CD8-positive, alpha-beta T cell (primary cell): ENCODE measurements at regions of chr3 and their contacts with region 1.

Region 1: GRCh38 chr3:161305095-161305991 is 66.0 kb downstream of the SPTSSB start:
- DNase-seq: peak in 3 of 9 experiments; percentile 18 to 52 (median 38)
- ATAC-seq: no peak
- H3K4me3 ChIP-seq: no peak overlapping the region
- H3K4me3 Mint-ChIP-seq: no peak overlapping the region
- H3K27ac ChIP-seq: no peak overlapping the region
- H3K27ac Mint-ChIP-seq: no peak overlapping the region
- H3K4me1 ChIP-seq: peaks cover 11% of the 10 kb centered on the region
- H3K4me1 Mint-ChIP-seq: peaks cover 29% of the 10 kb centered on the region
- H3K27me3 ChIP-seq: no peaks in the 10 kb centered on the region
- H3K27me3 Mint-ChIP-seq: peaks cover 3% of the 10 kb centered on the region
- CTCF ChIP-seq: peak; percentile 79

Region 2: DNA sequence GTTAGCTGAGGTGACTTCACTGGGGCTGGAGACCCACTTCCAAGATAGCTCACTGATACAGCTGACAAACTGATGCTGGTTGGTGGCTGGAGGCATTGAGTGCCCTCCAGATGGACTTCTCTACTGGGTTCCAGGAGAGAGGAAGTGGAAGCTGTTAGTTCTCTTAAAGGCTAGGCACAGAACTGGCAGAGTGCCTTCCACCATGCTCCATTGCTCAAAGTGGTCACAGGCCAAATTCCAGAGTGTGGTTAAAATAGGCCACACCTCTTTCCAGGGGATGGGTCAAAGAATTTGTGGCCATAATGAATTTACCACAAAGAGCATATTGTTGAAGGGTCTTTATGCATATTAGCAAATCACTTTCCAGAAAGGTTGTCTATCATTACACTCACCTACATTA is 10.0 kb before region 1 on chr3:
- CTCF ChIA-PET with region 1: interaction called, 26 read pairs
- POLR2A ChIA-PET with region 1: interaction called, 5 read pairs
- intact Hi-C with region 1: no loop called
- DNase-seq: no peak
- ATAC-seq: no peak
- H3K4me3 ChIP-seq: no peak overlapping the region
- H3K4me3 Mint-ChIP-seq: no peak overlapping the region
- H3K27ac ChIP-seq: no peak overlapping the region
- H3K27ac Mint-ChIP-seq: no peak overlapping the region
- H3K4me1 ChIP-seq: no peaks in the 10 kb centered on the region
- H3K4me1 Mint-ChIP-seq: no peaks in the 10 kb centered on the region
- H3K27me3 ChIP-seq: peaks cover 0 to 2% of the 10 kb centered on the region in 2 experiments
- H3K27me3 Mint-ChIP-seq: peaks cover 3% of the 10 kb centered on the region
- CTCF ChIP-seq: no peak

Region 3: GRCh38 chr3:161731968-161732367 is 426.6 kb after region 1 on chr3:
- CTCF ChIA-PET with region 1: no interaction called
- POLR2A ChIA-PET with region 1: no interaction called
- intact Hi-C with region 1: no loop called
- DNase-seq: no peak
- ATAC-seq: no peak
- H3K4me3 ChIP-seq: no peak overlapping the region
- H3K4me3 Mint-ChIP-seq: no peak overlapping the region
- H3K27ac ChIP-seq: no peak overlapping the region
- H3K27ac Mint-ChIP-seq: no peak overlapping the region
- H3K4me1 ChIP-seq: no peaks in the 10 kb centered on the region
- H3K4me1 Mint-ChIP-seq: no peaks in the 10 kb centered on the region
- H3K27me3 ChIP-seq: no peaks in the 10 kb centered on the region
- H3K27me3 Mint-ChIP-seq: no peaks in the 10 kb centered on the region
- CTCF ChIP-seq: no peak